Activated CD4-positive, alpha-beta memory T cell treated with anti-CD3 and anti-CD28 coated beads for 36 hours (primary cell): ENCODE measurements at regions of chr14 and their contacts with region 1.

Region 1: DNA sequence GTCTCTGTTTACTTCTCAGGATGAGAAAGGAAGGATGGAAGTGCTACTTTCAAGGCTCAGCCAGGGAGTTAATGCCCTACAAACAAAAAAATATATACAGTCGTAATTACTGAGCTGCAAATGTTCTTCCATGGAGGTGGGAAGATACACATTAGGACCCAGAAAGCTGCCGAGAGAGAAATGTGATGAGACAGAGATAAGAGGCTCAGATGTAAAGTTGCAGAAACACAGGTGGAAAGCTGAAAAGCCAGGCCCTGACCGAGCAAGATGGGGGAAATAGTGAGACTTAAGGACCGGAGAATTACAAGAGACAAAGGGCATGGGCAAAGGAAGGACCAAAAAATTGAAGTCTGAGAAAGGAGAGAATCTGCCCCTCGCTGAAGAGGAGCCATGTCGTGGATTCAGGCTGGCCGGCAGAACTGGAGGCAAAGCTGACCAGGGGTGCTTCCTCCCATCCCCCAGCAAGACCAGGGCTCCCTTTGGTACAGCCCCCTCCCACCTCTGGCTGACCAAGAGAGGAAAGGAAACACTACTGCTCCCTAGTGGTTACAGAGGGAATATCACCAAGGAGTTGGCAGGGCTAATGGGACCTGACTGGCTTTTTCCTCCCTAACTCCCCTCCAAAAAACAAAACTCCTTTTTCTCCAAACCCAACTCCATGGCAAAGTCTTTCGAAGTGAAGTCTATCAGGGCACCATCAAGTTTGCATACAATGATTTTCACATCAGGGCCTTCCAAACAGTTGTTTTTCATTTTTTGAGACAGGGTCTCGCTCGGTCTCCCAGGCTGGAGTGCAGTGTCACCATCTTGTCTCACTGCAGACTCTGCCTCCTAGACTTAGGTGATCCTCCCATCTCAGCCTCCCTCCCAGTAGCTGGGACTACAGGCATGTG is 12.1 kb downstream of the ZFHX2 start:
- DNase-seq: peak; percentile 28
- H3K4me3 Mint-ChIP-seq: no peak overlapping the region
- H3K27ac Mint-ChIP-seq: no peak overlapping the region
- H3K4me1 Mint-ChIP-seq: no peaks in the 10 kb centered on the region
- H3K27me3 Mint-ChIP-seq: peaks cover 2% of the 10 kb centered on the region

Region 2: GRCh38 chr14:22802860-22803686 is 736.4 kb before region 1 on chr14:
- CTCF ChIA-PET with region 1: no interaction called
- POLR2A ChIA-PET with region 1: no interaction called
- intact Hi-C with region 1: no loop called
- DNase-seq: no peak
- H3K4me3 Mint-ChIP-seq: no peak overlapping the region
- H3K27ac Mint-ChIP-seq: no peak overlapping the region
- H3K4me1 Mint-ChIP-seq: no peaks in the 10 kb centered on the region
- H3K27me3 Mint-ChIP-seq: peaks cover 28% of the 10 kb centered on the region

Region 3: GRCh38 chr14:22994762-22995275 is 544.7 kb before region 1 on chr14:
- CTCF ChIA-PET with region 1: no interaction called
- POLR2A ChIA-PET with region 1: no interaction called
- intact Hi-C with region 1: no loop called
- DNase-seq: peak; percentile 40
- H3K4me3 Mint-ChIP-seq: no peak overlapping the region
- H3K27ac Mint-ChIP-seq: no peak overlapping the region
- H3K4me1 Mint-ChIP-seq: peaks cover 3% of the 10 kb centered on the region
- H3K27me3 Mint-ChIP-seq: no peaks in the 10 kb centered on the region

Region 4: GRCh38 chr14:23478111-23478759 is 61.3 kb before region 1 on chr14:
- CTCF ChIA-PET with region 1: interaction called, 63 read pairs
- POLR2A ChIA-PET with region 1: interaction called, 3 read pairs
- intact Hi-C with region 1: loop called (anchors 1 kb)
- DNase-seq: peak; percentile 68
- H3K4me3 Mint-ChIP-seq: no peak overlapping the region
- H3K27ac Mint-ChIP-seq: peak overlapping the region; percentile 31
- H3K4me1 Mint-ChIP-seq: peaks cover 2% of the 10 kb centered on the region
- H3K27me3 Mint-ChIP-seq: no peaks in the 10 kb centered on the region

Region 5: DNA sequence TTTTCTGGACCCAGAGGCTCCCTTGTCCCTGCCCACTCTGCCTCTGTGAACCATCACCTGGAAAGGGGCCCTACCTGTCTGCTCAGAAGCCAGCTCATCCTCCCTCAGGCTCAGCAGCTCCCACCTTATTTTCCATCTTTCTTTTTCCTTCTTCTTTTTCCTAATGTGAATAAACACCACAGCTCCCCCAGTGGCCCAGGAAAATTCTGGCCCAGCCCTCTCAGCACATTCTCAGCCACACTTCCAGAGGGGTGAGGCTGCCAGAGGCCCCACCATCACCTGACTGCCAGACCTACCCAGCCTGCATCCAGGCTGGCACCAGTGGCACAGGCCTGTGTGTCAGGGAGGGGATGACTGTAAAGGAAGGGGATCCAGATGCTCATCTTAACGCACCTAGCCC is 10.9 kb before region 1 on chr14:
- CTCF ChIA-PET with region 1: interaction called, 14 read pairs
- POLR2A ChIA-PET with region 1: no interaction called
- intact Hi-C with region 1: no loop called
- DNase-seq: no peak
- H3K4me3 Mint-ChIP-seq: no peak overlapping the region
- H3K27ac Mint-ChIP-seq: no peak overlapping the region
- H3K4me1 Mint-ChIP-seq: no peaks in the 10 kb centered on the region
- H3K27me3 Mint-ChIP-seq: no peaks in the 10 kb centered on the region

Region 6: GRCh38 chr14:23567192-23568020 is 27.9 kb after region 1 on chr14 and contains the start of gene AP1G2:
- CTCF ChIA-PET with region 1: interaction called, 66 read pairs
- POLR2A ChIA-PET with region 1: no interaction called
- intact Hi-C with region 1: loop called (anchors 1 kb)
- DNase-seq: peak; percentile 95
- H3K4me3 Mint-ChIP-seq: peak within 1 kb of the TSS; percentile 91
- H3K27ac Mint-ChIP-seq: peak within 1 kb of the TSS; percentile 90
- H3K4me1 Mint-ChIP-seq: peaks cover 34% of the 10 kb centered on the region
- H3K27me3 Mint-ChIP-seq: no peaks in the 10 kb centered on the region
- total RNA-seq, gene AP1G2: 182 to 190 TPM